ENCODE measurements at regions of chr10 and their contacts with region 1.

Region 1: DNA sequence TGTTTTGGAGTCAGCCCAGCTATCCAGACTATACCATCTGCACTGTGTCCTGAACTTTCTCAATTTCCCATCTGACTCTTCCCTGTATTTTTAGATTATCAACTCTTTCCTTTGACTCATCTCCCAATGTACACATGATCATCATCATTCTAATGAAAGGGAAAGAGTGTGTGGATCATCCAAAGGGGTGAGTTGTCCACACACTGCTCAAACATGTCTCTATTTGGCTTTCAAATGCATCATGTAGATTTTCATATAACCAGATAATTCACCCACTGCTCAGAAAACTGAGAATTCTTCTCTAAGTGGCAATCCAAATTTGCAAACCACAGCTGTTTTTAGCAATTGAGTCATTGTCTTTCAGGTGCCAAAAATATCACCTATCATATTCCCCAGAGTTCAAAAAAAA is 190.2 kb upstream of the HPS1 start:
- DNase-seq: no peak
- H3K4me3 ChIP-seq: no peak overlapping the region
- CTCF ChIP-seq: no peak

Region 2: DNA sequence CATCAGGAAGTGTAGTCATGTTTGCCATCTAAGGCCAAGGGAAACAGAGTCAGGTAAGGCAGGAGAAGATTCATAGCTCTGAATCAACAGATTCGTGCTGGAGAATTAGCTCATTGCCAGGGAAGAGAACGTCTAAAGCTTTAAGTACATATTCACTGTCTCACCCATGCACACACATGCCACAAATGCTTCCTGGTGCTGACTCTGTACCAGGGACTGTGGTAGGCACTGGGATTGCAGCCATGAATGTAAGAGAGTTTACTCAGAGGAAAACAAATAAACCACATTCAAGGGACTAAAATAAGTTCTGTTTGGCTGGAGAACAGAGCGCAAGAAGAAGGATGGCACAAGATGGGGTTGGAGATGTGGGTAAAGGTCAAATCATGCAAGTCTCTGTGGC is 100.4 kb before region 1 on chr10:
- in situ Hi-C with region 1: no loop called
- DNase-seq: no peak
- H3K4me3 ChIP-seq: no peak overlapping the region
- CTCF ChIP-seq: no peak

Region 3: GRCh38 chr10:98589007-98589406 is 47.9 kb before region 1 on chr10:
- in situ Hi-C with region 1: no loop called
- DNase-seq: no peak
- H3K4me3 ChIP-seq: no peak overlapping the region
- CTCF ChIP-seq: no peak

Region 4: GRCh38 chr10:98713586-98713985 is 76.7 kb after region 1 on chr10:
- in situ Hi-C with region 1: loop called (anchors 10 kb)
- DNase-seq: no peak
- H3K4me3 ChIP-seq: no peak overlapping the region
- CTCF ChIP-seq: no peak

Measured in astrocyte of the cerebellum (primary cell).